Posterior cingulate gyrus (tissue), 11 donors: ENCODE measurements at regions of chr11 and their contacts with region 1.

Region 1: DNA sequence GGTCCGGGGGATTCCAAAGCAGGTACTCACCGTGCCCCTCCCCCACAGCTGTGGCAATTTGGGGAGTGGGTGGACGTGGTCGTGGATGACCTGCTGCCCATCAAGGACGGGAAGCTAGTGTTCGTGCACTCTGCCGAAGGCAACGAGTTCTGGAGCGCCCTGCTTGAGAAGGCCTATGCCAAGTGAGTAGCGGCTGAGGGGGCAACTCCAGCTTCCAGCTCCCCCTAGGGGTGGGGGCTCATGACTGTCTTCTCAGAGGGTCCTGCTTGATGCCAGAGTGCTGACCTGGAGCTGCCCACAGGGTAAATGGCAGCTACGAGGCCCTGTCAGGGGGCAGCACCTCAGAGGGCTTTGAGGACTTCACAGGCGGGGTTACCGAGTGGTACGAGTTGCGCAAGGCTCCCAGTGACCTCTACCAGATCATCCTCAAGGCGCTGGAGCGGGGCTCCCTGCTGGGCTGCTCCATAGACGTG is 4.2 kb downstream of the CAPN1 start:
- DNase-seq: peak in 2 of 10 donors; percentile 42 to 77

Region 2: GRCh38 chr11:64960719-64961118 is 225.2 kb before region 1 on chr11:
- intact Hi-C with region 1: no loop called
- DNase-seq: no peak

Region 3: DNA sequence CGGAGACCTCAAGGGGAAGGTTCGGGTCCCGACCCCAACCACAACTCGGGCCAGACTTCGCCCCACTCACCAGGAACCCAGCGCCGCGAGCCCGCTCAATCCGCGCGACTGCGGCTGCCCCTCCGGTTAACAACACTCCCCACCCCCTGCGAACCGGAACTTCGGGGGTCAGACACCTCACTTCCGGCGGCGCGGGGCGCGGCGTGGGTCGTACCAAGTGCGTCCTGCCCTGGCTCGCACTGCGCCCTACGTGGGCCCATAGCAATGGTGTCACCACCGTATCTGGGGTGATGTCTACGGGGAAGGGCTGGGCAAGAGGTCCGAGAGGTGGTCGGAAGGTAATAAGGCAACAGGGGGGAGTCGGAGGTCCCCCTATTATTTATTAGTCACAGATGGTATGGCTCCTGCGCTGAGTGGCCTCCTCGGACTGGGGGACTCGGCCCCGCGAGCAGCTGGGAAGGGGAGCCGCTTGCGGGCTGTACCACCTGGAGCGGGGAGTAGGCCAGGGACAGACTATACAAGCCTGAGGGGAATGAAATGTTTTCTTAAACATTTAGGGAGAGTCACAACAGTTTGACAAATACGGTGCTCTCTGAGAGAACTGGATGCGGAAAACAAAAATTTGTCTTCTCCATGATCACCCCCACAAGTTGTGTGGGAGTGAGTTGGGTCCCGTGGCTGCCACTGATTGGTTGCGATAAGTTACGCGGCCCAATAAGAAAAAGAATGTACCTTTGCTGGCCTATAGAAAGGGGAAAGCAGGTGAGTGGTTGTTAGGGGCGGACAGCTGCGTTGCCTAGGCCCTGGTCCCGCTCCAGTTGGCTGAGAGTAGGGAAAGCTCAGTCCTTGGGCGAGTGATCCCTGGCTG is 51.3 kb before region 1 on chr11 and contains the start of gene SYVN1:
- intact Hi-C with region 1: loop called (anchors 5 kb)
- DNase-seq: peak; percentile 90 to 99 (median 92)